ENCODE measurements at regions of chr17 and their contacts with region 1.

Region 1: DNA sequence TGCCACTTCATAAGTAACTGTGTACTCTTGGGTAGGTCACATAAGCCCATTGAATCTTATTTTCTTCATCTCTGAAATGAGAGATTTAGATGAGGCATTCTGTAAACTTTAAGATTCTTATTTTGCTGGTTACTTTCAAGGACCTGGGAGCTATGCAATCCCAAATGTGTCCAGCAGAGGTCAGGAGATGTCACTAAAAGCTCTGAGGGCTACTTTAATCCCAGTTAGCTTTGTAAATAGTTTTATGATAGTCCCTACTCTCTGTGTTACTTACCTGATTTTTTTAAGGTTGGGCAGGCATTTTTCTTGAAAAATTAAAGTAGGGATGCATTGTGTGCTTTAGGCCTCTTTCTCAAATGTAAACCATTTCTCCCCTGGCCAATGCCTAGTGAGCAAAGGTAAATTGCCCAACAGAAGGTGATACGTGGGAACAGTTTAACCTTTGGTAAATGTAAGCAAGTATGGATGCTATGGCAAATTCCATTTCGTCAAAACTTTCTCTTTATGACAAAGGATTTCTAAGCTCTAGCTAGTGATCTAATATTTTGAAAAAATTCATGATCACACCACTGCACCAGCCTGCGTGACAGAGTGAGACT is 57.1 kb upstream of the WSB1 start:
- DNase-seq: peak; percentile 16
- H3K4me3 ChIP-seq: no peak overlapping the region
- CTCF ChIP-seq: peak; percentile 62

Region 2: DNA sequence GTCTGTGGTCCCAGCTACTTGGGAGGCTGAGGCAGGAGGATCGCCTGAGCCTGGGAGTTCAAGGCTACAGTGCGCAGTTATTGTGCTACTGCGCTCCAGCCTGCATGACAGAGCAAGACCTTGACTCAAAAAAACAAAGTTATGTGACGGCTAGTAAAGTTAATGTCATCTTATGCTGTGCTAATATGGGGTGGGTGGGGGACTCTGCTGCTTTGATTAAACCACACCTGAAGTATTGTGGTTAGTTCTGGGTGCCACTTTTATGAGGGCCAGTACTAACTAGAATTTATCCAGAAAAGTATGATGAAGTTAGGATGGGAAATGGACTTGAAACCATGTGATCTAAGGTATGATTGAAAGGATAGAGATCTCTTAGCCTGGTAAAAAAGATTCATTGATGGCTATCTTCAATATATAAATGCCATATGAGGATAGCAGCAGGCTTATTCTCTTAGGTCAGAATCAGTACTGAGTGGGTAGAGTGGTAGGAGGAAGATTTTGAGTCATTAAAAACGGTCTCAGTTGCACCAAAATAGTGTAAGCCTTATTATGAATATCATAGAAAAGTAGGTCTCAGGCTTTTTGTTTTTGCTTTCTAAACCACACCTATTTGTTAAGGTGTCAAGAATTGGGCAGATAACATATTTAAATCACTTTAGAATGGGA is 62.7 kb after region 1 on chr17:
- CTCF ChIA-PET with region 1: interaction called, 22 read pairs
- POLR2A ChIA-PET with region 1: interaction called, 3 read pairs
- DNase-seq: no peak
- H3K4me3 ChIP-seq: no peak overlapping the region
- CTCF ChIP-seq: no peak

Region 3: DNA sequence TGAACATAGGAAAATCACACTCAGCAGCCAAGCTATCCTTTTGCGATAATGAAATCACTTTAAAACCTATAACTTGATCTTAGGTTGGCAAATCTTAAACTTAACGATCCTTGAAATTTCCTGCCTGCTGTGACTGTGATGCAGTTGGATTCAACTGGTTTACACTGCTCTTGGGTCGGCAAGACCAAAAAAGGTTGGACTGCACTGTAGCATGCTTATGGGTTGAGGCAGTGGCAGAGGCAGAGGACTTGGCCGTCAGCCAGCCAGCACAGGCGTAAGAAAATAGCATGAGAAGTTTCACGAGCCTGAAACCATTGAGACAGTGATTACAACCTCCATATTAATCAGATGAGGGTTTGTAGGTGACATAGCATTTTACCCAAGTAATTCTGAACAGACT is 78.5 kb after region 1 on chr17:
- CTCF ChIA-PET with region 1: interaction called, 35 read pairs
- POLR2A ChIA-PET with region 1: no interaction called
- DNase-seq: peak; percentile 49
- H3K4me3 ChIP-seq: no peak overlapping the region
- CTCF ChIP-seq: no peak

Region 4: GRCh38 chr17:27332485-27333409 is 95.9 kb after region 1 on chr17:
- CTCF ChIA-PET with region 1: interaction called, 269 read pairs
- POLR2A ChIA-PET with region 1: interaction called, 8 read pairs
- DNase-seq: peak; percentile 65
- H3K4me3 ChIP-seq: peak overlapping the region; percentile 56
- CTCF ChIP-seq: peak; percentile 93

Region 5: GRCh38 chr17:27430882-27431491 is 194.2 kb after region 1 on chr17:
- CTCF ChIA-PET with region 1: interaction called, 28 read pairs
- POLR2A ChIA-PET with region 1: no interaction called
- DNase-seq: no peak
- H3K4me3 ChIP-seq: no peak overlapping the region
- CTCF ChIP-seq: peak; percentile 83

Region 6: GRCh38 chr17:27654654-27655524 is 418.1 kb after region 1 on chr17:
- CTCF ChIA-PET with region 1: interaction called, 69 read pairs
- POLR2A ChIA-PET with region 1: no interaction called
- DNase-seq: no peak
- H3K4me3 ChIP-seq: no peak overlapping the region
- CTCF ChIP-seq: peak; percentile 78